AG04450 (cell line): ENCODE measurements at regions of chr20 and their contacts with region 1.

Region 1: GRCh38 chr20:54643791-54644190 is 168.4 kb downstream of the DOK5 start:
- DNase-seq: peak; percentile 10
- H3K4me3 ChIP-seq: no peak overlapping the region
- H3K27ac ChIP-seq: no peak overlapping the region
- H3K27me3 ChIP-seq: no peaks in the 10 kb centered on the region
- CTCF ChIP-seq: no peak

Region 2: DNA sequence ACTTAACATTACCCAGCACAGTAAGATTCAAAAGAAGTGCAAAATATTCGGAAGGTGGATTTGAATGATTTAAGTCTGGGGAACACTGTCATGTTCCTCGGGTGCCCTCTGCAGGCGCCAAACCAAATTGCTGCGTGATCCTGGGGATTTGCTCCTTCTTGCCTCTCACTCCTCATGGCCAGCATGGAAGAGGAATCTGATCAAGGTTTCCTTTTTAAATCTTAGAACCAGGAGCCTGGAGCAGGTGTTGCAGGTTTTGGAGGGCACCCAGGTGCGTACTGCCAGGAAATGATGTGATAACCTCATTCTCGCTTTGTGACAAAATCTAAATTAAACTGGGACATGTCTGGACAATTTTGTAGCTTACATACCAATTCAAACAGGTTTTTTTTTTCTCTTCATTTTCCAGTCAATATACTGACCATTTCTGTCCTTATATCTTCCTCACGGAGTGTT is 444.0 kb before region 1 on chr20:
- CTCF ChIA-PET with region 1: interaction called, 20 read pairs
- POLR2A ChIA-PET with region 1: no interaction called
- DNase-seq: peak; percentile 56
- H3K4me3 ChIP-seq: no peak overlapping the region
- H3K27ac ChIP-seq: no peak overlapping the region
- H3K27me3 ChIP-seq: peaks cover 12% of the 10 kb centered on the region
- CTCF ChIP-seq: peak; percentile 97

Region 3: DNA sequence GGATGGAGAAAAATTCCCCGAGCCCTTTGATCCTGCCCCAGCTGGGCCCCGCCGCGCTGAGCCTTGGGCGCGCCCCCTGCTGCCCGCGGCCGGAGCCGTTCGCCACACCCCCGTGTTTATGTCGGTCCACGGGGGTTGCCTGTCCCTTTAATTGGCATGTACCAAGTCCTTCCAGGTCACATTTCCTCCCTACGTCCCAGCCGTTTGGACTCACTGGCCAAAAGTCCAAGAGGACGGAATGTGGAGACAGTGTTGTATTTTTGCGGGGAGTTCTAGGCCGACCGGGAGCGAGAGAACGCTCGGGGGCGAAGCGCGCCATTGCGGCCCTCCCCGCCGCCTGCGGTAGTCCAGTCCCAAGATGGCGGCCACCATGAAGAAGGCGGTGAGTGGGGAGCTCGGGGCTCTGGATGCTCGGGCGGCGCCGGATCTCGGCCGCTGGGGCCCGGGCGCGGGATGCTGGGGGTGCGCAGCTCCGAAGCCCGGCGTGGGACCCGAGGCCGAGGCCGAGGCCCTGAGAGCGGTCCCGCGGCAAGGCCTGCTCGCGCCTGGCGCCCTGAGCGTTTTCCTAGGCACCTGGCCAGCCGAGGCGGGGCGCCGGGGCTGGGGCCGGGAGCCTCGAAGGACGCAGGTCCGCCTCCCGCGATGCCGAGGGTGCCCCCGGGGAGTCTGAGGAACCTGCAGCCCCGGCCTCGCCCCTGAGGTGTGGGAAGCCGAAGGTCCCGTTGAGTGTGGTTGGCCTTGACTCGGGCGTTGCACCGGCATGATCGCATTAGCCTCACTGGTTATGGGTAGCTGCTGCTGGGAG is 435.8 kb before region 1 on chr20 and contains the start of gene PFDN4:
- CTCF ChIA-PET with region 1: interaction called, 38 read pairs
- POLR2A ChIA-PET with region 1: no interaction called
- DNase-seq: peak; percentile 56
- H3K4me3 ChIP-seq: peak within 1 kb of the TSS; percentile 94
- H3K27ac ChIP-seq: peak within 1 kb of the TSS; percentile 95
- H3K27me3 ChIP-seq: no peaks in the 10 kb centered on the region
- CTCF ChIP-seq: peak; percentile 81
- polyA plus RNA-seq, gene PFDN4: 63.9 and 104 TPM in 2 replicates

Region 4: DNA sequence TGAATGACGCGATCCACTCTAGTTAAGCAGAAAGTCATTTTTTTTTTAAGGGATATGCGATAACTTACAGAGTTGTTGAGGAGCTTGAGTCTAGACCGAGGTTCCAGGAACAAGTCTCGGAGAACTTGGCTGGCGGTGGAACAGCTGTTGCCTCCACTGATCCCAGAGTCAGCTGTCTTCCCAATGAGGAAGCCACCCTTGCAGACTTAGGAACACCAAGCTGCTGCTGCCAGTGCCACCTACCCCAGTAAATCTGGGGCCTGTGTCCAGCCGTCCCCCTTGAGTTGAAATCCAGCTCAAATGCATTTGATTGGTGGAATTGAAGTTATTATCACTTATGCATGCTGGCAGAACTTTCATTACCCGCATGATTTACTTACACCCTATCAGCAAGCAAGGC is 429.2 kb before region 1 on chr20:
- CTCF ChIA-PET with region 1: interaction called, 126 read pairs
- POLR2A ChIA-PET with region 1: no interaction called
- DNase-seq: no peak
- H3K4me3 ChIP-seq: no peak overlapping the region
- H3K27ac ChIP-seq: no peak overlapping the region
- H3K27me3 ChIP-seq: no peaks in the 10 kb centered on the region
- CTCF ChIP-seq: no peak

Region 5: GRCh38 chr20:54219751-54220426 is 423.9 kb before region 1 on chr20:
- CTCF ChIA-PET with region 1: interaction called, 126 read pairs
- POLR2A ChIA-PET with region 1: interaction called, 3 read pairs
- DNase-seq: no peak
- H3K4me3 ChIP-seq: no peak overlapping the region
- H3K27ac ChIP-seq: no peak overlapping the region
- H3K27me3 ChIP-seq: no peaks in the 10 kb centered on the region
- CTCF ChIP-seq: peak; percentile 69